ENCODE measurements at regions of chr14 and their contacts with region 1.

Region 1: DNA sequence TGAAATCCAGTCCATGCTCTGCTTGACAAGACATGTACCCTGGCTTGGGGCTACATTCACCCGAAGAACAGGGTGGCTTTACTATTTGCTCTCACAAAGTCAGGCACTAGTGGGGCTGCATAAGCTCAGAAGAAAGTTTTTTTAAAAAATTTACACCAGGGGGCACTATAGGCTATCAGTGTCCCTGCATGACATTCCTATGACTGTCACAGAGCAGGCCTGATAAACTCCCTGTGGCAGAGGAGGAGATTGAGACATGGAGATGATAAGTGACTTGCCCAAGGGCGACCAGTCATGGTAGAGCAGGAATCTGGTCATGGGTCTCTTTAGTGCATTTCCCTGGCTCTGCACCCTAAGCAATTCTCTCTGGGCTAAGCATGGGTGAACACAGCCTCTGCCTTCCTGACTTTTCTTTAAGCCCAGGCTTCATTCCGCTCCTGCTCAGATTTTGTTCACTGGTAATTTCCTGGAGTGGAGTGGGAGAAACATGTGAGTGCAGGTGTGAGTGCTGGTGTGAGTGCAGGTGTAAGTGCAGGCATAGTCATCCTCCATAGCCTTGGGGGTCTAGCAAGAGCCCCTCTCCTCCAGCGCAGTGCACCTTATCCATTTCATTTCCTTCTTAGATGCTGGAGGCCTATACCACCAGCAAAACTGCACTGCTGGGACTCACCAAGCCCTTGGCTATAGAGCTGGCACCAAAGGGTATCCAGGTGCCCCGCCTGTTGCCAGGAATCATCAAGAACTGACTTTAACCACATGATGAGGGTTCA is 91.6 kb downstream of the DHRS2 start:
- DNase-seq: peak in 1 of 9 donors; percentile 9
- ATAC-seq: peak; percentile 50
- H3K4me3 ChIP-seq: no peak overlapping the region
- H3K4me3 Mint-ChIP-seq: no peak overlapping the region
- H3K27ac ChIP-seq: no peak overlapping the region
- H3K27ac Mint-ChIP-seq: no peak overlapping the region
- H3K4me1 ChIP-seq: no peaks in the 10 kb centered on the region
- H3K4me1 Mint-ChIP-seq: no peaks in the 10 kb centered on the region
- H3K27me3 ChIP-seq: no peaks in the 10 kb centered on the region
- H3K27me3 Mint-ChIP-seq: peaks cover 0 to 20% (median 10%) of the 10 kb centered on the region in 5 donors

Region 2: GRCh38 chr14:23929822-23930294 is 202.1 kb after region 1 on chr14:
- CTCF ChIA-PET with region 1: no interaction called
- POLR2A ChIA-PET with region 1: no interaction called
- intact Hi-C with region 1: loop called in 1 of 2 experiments (anchors 2 kb)
- DNase-seq: peak; percentile 54 to 81 (median 71)
- ATAC-seq: peak; percentile 92
- H3K4me3 ChIP-seq: no peak overlapping the region
- H3K4me3 Mint-ChIP-seq: no peak overlapping the region
- H3K27ac ChIP-seq: no peak overlapping the region
- H3K27ac Mint-ChIP-seq: no peak overlapping the region
- H3K4me1 ChIP-seq: no peaks in the 10 kb centered on the region
- H3K4me1 Mint-ChIP-seq: no peaks in the 10 kb centered on the region
- H3K27me3 ChIP-seq: no peaks in the 10 kb centered on the region
- H3K27me3 Mint-ChIP-seq: peaks cover 0 to 8% (median 0%) of the 10 kb centered on the region in 5 donors

Region 3: GRCh38 chr14:24067145-24068082 is 339.7 kb after region 1 on chr14:
- CTCF ChIA-PET with region 1: no interaction called
- POLR2A ChIA-PET with region 1: no interaction called
- intact Hi-C with region 1: no loop called
- DNase-seq: no peak
- ATAC-seq: no peak
- H3K4me3 ChIP-seq: no peak overlapping the region
- H3K4me3 Mint-ChIP-seq: no peak overlapping the region
- H3K27ac ChIP-seq: no peak overlapping the region
- H3K27ac Mint-ChIP-seq: no peak overlapping the region
- H3K4me1 ChIP-seq: no peaks in the 10 kb centered on the region
- H3K4me1 Mint-ChIP-seq: peaks cover 0 to 6% (median 0%) of the 10 kb centered on the region in 7 donors
- H3K27me3 ChIP-seq: no peaks in the 10 kb centered on the region
- H3K27me3 Mint-ChIP-seq: peaks cover 0 to 13% (median 5%) of the 10 kb centered on the region in 5 donors

Measured in naive thymus-derived CD4-positive, alpha-beta T cell (primary cell).